Breast epithelium (tissue), 4 donors: ENCODE measurements at regions of chr9 and their contacts with region 1.

Region 1: DNA sequence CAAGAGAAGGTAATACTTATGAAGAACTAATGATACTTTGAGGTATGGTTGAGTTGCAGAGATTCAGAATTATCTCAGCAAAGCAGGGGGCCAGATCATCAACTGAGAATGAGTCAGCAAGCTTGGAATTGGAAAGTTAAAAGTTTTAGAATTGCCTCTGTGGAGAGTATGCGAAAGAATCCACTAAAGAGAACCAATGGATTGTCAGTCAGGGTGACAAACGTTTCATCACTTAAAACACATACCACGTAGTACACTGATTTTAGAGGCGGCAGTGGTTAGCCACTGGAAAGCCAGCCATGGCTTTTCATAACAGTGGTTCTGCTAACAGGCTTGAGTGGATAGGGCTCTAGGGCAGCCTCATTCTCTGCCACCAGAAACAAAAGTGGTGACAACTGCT is 30.7 kb downstream of the AOPEP start:
- DNase-seq: no peak
- H3K4me3 ChIP-seq: no peak overlapping the region
- H3K27ac ChIP-seq: no peak overlapping the region
- H3K4me1 ChIP-seq: no peaks in the 10 kb centered on the region
- H3K27me3 ChIP-seq: no peaks in the 10 kb centered on the region
- CTCF ChIP-seq: no peak
- POLR2A ChIP-seq: no peak

Region 2: GRCh38 chr9:94554439-94555391 is 202.4 kb before region 1 on chr9 and contains the start of gene PCAT7:
- intact Hi-C with region 1: no loop called
- DNase-seq: peak; percentile 41 to 68
- H3K4me3 ChIP-seq: peak within 1 kb of the TSS in 2 of 3 donors; percentile 16 to 34
- H3K27ac ChIP-seq: peak within 1 kb of the TSS in 1 of 2 donors; percentile 1
- H3K4me1 ChIP-seq: no peaks in the 10 kb centered on the region
- H3K27me3 ChIP-seq: no peaks in the 10 kb centered on the region
- CTCF ChIP-seq: peak in 2 of 3 donors; percentile 29 to 58
- POLR2A ChIP-seq: no peak
- total RNA-seq, gene PCAT7: under 0.01 TPM in 1 of 3 donors, not detected in the others

Region 3: GRCh38 chr9:94681508-94681907 is 75.7 kb before region 1 on chr9:
- intact Hi-C with region 1: no loop called
- DNase-seq: peak in 1 of 2 donors; percentile 40
- H3K4me3 ChIP-seq: no peak overlapping the region
- H3K27ac ChIP-seq: no peak overlapping the region
- H3K4me1 ChIP-seq: no peaks in the 10 kb centered on the region
- H3K27me3 ChIP-seq: no peaks in the 10 kb centered on the region
- CTCF ChIP-seq: peak in 2 of 3 donors; percentile 22 to 73
- POLR2A ChIP-seq: no peak

Region 4: DNA sequence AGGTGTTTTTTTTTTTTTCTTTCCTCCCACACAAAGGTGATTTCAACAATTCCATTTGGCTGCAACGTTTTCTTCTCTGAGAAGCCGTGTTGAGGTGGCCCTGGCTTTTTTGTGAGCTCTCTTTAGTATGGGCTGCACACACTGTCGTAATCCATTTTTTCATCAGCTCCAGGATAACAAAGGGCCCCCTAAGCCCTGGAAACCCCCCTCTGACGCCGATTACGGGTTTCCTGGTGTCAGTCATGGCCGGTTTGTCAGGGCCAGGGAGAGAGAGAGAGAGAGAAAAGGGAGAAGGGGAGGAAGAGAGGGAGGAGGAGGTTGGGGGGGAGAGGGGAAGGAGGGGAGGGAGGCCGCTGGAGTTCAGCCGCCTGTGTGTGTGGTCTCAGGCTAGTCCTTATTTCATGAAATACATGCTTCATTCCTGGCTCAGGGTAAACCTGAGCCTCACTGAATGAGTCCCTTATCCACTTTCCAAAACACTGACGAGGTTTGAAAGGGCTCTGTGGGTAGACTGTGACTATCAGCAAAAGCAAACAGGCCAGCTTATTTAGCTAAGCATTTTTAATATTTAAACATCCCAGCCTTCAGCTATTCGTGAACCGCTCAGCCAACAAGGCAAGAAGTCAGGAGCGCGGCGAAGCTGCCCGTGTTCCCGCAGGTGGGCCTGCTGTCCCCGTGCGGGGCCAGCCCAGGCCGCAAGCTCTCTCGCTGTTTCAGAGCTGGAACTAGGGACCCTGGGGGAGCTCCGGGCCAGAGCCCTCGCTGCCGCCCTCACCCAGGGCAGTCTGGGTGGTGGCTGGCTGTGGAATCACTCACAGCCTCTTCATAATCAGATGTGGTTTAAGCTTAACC is 1291.2 kb after region 1 on chr9:
- intact Hi-C with region 1: loop called (anchors 10 kb)
- DNase-seq: no peak
- H3K4me3 ChIP-seq: peak overlapping the region in 2 of 3 donors; percentile 34 to 48
- H3K27ac ChIP-seq: peak overlapping the region; percentile 74 to 83
- H3K4me1 ChIP-seq: no peaks in the 10 kb centered on the region
- H3K27me3 ChIP-seq: no peaks in the 10 kb centered on the region
- CTCF ChIP-seq: no peak
- POLR2A ChIP-seq: no peak